ENCODE measurements at regions of chr11 and their contacts with region 1.

Region 1: DNA sequence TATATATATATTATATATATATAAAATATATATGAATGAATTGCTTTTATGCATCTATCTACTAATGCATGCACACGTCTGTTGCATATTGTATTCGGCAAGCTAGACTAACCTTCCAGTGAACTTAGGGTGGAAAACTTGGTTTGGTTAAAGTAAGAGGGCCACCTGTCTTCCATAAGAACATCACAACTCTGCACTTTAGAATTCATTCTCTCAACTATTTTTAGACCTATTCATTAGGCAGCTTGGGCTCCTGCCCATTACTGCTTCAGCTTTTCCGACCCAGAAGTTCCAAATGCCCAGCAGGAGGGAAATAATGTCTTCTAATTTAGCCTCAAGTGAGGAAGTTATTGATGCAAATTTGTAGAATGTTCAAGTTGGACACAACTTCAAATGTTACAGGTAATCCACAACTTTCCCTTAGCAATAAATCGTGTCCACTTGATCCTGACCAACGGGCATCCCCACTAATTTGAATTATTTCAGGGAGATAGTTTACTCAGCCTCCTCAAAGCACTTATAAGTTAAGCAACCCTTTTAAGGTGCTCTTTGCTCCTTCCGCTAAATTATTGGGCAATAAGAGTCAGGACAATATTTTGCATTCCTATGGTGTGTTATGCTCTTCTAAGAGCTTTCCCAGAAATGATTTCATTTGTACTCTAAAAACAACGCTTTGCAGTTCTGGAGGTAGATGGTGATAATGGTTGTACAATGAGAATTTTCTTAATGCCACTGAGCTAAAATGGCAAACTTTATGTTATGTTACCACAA is 132.3 kb downstream of the OPCML start:
- DNase-seq: no peak
- H3K4me3 ChIP-seq: no peak overlapping the region
- H3K27ac ChIP-seq: no peak overlapping the region
- H3K4me1 ChIP-seq: no peaks in the 10 kb centered on the region
- H3K27me3 ChIP-seq: no peaks in the 10 kb centered on the region
- CTCF ChIP-seq: no peak

Region 2: GRCh38 chr11:132941024-132941646 is 458.9 kb before region 1 on chr11:
- intact Hi-C with region 1: loop called (anchors 5 kb)
- DNase-seq: no peak
- H3K4me3 ChIP-seq: no peak overlapping the region
- H3K27ac ChIP-seq: no peak overlapping the region
- H3K4me1 ChIP-seq: peaks cover 0 to 8% (median 0%) of the 10 kb centered on the region in 4 donors
- H3K27me3 ChIP-seq: peaks cover 0 to 41% of the 10 kb centered on the region in 2 donors
- CTCF ChIP-seq: peak; percentile 43 to 64

Region 3: GRCh38 chr11:134425816-134426536 is 1025.9 kb after region 1 on chr11:
- intact Hi-C with region 1: no loop called
- DNase-seq: no peak
- H3K4me3 ChIP-seq: no peak overlapping the region
- H3K27ac ChIP-seq: no peak overlapping the region
- H3K4me1 ChIP-seq: no peaks in the 10 kb centered on the region
- H3K27me3 ChIP-seq: peaks cover 0 to 34% of the 10 kb centered on the region in 2 donors
- CTCF ChIP-seq: no peak

Measured in tibial artery (tissue), 4 donors.